ENCODE measurements at regions of chr5 and their contacts with region 1.

Region 1: DNA sequence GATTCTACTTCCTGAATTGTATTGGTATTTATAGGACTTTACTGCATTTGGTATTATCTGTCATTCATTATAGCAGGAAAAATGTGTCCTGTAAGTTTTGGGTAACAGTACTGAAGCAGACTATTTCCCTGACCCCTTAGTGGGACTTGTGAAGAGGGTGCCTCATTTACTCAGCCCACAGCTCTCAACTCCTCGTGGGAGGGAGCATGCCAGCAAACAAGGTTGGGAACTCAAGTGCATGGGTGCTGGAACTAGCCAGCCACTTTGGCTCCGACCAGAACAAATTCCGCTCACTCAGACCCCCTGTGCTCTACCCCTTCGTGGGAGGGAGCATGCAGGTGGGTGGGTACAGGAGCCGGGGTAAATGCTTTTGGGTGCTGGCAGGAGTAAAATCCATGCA is 1773.5 kb upstream of the WWC1 start:
- DNase-seq: no peak
- ATAC-seq: no peak
- H3K4me3 ChIP-seq: no peak overlapping the region
- H3K27ac ChIP-seq: no peak overlapping the region
- H3K4me1 ChIP-seq: no peaks in the 10 kb centered on the region
- H3K27me3 ChIP-seq: no peaks in the 10 kb centered on the region
- CTCF ChIP-seq: no peak
- POLR2A ChIP-seq: no peak

Region 2: DNA sequence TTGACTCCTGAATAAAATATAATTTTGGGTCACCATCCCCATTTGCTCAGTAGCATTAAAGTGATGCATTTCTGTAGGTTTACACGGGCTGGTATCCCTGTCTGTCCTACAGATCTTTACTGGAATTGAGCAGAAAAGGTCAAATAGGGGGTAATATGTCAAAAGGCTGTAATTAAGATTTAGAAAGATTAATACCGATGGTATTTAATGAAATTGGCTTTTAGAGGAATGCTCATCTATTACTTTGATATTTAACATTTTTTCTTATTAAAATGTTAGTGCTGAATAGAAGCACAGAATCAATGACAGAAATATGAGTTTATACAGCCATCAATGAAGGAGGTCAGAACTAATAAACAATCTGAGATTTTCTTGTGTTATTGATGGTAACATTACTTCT is 11.2 kb after region 1 on chr5:
- intact Hi-C with region 1: loop called in 1 of 10 experiments (anchors 1 kb)
- DNase-seq: no peak
- ATAC-seq: no peak
- H3K4me3 ChIP-seq: no peak overlapping the region
- H3K27ac ChIP-seq: no peak overlapping the region
- H3K4me1 ChIP-seq: no peaks in the 10 kb centered on the region
- H3K27me3 ChIP-seq: no peaks in the 10 kb centered on the region
- CTCF ChIP-seq: no peak
- POLR2A ChIP-seq: no peak

Region 3: GRCh38 chr5:166551384-166551783 is 33.4 kb after region 1 on chr5:
- intact Hi-C with region 1: no loop called
- DNase-seq: no peak
- ATAC-seq: no peak
- H3K4me3 ChIP-seq: no peak overlapping the region
- H3K27ac ChIP-seq: no peak overlapping the region
- H3K4me1 ChIP-seq: no peaks in the 10 kb centered on the region
- H3K27me3 ChIP-seq: no peaks in the 10 kb centered on the region
- CTCF ChIP-seq: no peak
- POLR2A ChIP-seq: no peak

Measured in heart left ventricle (tissue), 16 donors.